ENCODE measurements at regions of chr14 and their contacts with region 1.

Region 1: DNA sequence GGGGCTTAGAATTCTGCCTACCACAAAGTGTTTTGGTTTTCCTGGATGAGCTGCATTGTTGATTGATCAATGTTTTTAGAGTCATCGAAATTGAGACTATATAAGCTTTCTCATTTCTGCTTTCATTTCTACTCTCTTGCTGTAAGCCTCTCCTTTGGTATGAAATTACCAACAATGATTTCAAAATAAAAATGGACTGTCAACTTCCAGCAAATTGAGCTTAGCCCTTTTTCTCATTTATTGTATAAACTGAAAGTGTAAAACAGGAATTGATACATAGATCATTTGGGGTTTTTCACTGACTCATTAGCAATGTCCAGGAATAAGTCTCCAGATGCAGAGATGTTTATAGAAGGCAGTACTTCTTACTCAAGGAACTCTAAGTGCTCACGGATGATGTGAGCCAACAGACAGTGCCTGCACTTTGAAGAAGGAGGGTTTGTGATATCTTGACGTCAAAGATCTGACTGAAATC is 20.0 kb upstream of the PCNX1 start:
- DNase-seq: no peak
- H3K4me3 Mint-ChIP-seq: peak overlapping the region; percentile 76
- H3K27ac Mint-ChIP-seq: peak overlapping the region; percentile 93
- H3K4me1 Mint-ChIP-seq: peaks cover 80% of the 10 kb centered on the region
- H3K27me3 Mint-ChIP-seq: no peaks in the 10 kb centered on the region

Region 2: DNA sequence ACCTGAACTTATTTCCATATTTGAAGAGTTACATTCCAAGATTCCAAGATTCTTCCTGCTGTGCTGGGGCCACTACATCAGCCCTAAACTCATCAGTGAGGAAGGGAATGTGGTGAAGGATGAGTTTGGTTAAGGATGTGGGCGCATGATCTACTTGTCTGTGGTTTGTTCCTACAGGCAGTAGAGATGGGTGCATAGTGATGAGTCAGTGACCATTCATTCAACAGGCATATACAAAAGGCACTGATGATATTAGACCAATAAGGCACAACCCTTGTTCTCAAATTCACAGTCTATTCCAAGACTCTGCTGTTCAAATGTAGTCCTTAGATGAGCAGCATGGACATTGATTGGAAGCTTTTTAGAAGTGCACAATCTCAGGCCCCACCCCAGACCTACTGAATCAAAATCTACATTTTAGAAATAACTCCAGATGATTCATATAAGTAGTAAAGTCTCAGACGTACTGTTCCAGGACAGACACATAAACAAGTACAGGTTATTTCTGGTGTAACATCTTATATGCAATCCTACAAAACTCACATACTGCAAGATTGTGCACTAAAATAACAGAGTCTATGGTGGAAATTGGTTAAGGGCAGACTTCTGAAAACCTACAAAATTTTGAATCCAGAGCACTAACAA is 30.3 kb before region 1 on chr14:
- intact Hi-C with region 1: loop called (anchors 2 kb)
- DNase-seq: peak; percentile 59
- H3K4me3 Mint-ChIP-seq: no peak overlapping the region
- H3K27ac Mint-ChIP-seq: peak overlapping the region; percentile 36
- H3K4me1 Mint-ChIP-seq: peaks cover 12% of the 10 kb centered on the region
- H3K27me3 Mint-ChIP-seq: no peaks in the 10 kb centered on the region

Region 3: GRCh38 chr14:70902184-70902583 is 14.9 kb after region 1 on chr14:
- intact Hi-C with region 1: loop called (anchors 1 kb)
- DNase-seq: no peak
- H3K4me3 Mint-ChIP-seq: no peak overlapping the region
- H3K27ac Mint-ChIP-seq: no peak overlapping the region
- H3K4me1 Mint-ChIP-seq: peaks cover 52% of the 10 kb centered on the region
- H3K27me3 Mint-ChIP-seq: no peaks in the 10 kb centered on the region

Region 4: DNA sequence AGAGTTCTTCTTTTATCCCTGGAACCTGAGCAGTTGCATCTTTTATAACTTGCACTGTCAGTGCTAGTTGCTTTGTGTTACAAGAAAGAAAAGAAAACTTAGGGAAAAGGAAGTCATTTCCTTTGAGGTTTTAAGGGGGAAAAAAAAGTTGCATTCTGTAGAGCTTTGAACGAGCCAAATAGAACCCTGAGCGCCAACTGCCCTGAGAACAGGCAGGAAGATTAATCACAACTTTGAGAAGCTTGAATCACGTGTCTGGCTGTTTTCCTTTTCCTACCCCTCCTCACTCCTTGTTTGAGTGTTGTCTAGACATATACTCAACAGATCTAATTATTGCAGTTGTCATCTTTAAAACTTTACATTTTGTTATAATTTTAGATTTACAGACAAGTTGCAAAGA is 32.5 kb after region 1 on chr14:
- intact Hi-C with region 1: loop called (anchors 5 kb)
- DNase-seq: no peak
- H3K4me3 Mint-ChIP-seq: peak overlapping the region; percentile 50
- H3K27ac Mint-ChIP-seq: peak overlapping the region; percentile 22
- H3K4me1 Mint-ChIP-seq: peaks cover 62% of the 10 kb centered on the region
- H3K27me3 Mint-ChIP-seq: no peaks in the 10 kb centered on the region

Region 5: DNA sequence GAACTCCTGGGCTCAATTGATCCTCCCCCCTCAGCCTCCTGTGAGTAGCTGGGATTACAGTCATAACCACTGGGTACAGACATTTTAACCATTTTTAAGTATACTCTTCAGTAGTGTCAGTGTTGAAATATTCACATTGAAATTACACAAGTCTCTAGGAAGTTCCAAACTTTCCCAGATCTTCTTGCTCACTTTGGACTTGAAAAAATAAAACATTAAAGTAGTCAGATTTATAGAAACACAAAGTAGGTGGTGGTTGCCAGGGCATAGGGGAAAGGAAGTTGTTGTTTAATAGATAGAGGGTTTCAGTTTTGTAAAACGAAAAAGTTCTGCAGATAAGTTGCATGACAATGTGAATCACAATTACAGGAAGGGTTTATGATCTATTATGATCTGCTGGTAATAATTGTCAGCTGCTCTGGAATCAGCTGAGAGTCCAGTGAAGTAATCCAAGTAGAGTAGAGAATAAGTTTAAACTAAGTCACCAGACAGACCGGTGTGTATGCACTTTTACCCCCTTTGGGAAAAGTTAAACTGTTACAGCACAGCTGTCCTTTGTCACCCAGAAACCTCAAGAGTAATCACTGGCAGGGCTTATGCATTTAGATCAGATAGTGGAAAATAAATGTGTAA is 47.4 kb after region 1 on chr14:
- intact Hi-C with region 1: loop called (anchors 2 kb)
- DNase-seq: no peak
- H3K4me3 Mint-ChIP-seq: peak overlapping the region; percentile 61
- H3K27ac Mint-ChIP-seq: peak overlapping the region; percentile 73
- H3K4me1 Mint-ChIP-seq: peaks cover 50% of the 10 kb centered on the region
- H3K27me3 Mint-ChIP-seq: no peaks in the 10 kb centered on the region

Region 6: DNA sequence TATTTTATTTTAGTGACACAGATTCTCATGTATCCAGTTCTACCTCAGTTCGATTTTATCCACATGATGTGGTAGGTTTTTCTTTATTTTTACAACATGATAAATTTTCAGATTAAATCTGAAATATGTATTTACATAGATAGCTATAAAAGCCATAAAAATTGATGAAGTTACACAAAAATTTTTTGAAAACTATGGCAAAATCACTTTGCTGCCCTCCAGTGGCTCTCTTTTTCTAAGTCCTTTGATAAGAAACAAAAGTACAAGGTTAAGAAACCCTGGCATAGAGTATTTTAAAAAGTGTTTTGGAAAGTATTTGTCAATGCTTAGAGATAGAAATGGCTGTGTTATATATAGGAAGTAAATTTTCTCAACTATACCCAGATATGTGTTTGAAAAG is 124.2 kb after region 1 on chr14:
- intact Hi-C with region 1: no loop called
- DNase-seq: no peak
- H3K4me3 Mint-ChIP-seq: no peak overlapping the region
- H3K27ac Mint-ChIP-seq: no peak overlapping the region
- H3K4me1 Mint-ChIP-seq: peaks cover 5% of the 10 kb centered on the region
- H3K27me3 Mint-ChIP-seq: no peaks in the 10 kb centered on the region

Measured in activated CD4-positive, alpha-beta T cell treated with anti-CD3 and anti-CD28 coated beads, Interleukin-2, amount 10 ng/mL, durations not matched to agents 24 days and 14 days (primary cell).